ENCODE measurements at regions of chr16 and their contacts with region 1.

Region 1: DNA sequence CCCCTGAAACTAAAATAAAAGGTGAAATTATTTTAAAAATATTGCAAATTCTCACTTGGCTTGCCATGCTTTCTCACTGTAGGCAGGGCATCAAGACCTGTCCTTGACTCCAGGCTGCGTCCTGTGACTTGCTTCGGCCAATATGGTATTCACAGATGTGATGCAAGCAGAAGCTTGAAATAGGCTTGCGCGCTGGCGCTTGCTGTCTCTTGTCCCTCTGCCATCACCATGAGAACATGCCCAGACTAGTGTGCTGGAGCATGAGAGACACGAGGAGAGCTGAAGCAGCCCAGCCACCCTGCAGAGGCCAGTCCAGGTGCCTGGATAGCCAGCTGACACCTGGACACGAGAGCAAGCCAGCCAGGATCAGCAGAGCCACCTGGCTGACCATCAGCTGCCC is 21.8 kb upstream of the ZKSCAN2 start:
- DNase-seq: peak; percentile 28
- H3K4me3 Mint-ChIP-seq: no peak overlapping the region
- H3K27ac Mint-ChIP-seq: no peak overlapping the region
- H3K4me1 Mint-ChIP-seq: peaks cover 11% of the 10 kb centered on the region
- H3K27me3 Mint-ChIP-seq: no peaks in the 10 kb centered on the region
- CTCF ChIP-seq: no peak

Region 2: DNA sequence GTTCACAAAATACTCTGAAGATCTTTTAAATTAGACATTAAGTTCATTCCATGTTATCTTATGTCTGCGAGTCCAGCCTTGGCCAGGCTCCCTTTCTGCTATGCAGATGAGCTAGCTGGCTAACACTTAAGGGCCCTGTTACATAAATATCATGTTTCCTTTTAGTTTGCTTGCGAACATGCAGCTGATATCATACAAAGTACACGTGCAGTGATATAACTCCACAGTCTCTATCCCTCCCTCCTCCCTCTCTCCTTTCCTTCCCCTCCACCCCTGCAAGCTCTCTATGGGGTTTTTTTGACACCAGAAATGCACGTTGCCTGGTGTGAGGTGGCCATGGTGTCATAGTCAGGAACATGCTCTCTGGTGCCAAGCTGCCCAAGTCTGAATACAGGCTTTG is 310.4 kb before region 1 on chr16:
- CTCF ChIA-PET with region 1: no interaction called
- POLR2A ChIA-PET with region 1: no interaction called
- intact Hi-C with region 1: no loop called
- DNase-seq: no peak
- H3K4me3 Mint-ChIP-seq: no peak overlapping the region
- H3K27ac Mint-ChIP-seq: no peak overlapping the region
- H3K4me1 Mint-ChIP-seq: no peaks in the 10 kb centered on the region
- H3K27me3 Mint-ChIP-seq: no peaks in the 10 kb centered on the region
- CTCF ChIP-seq: no peak

Region 3: GRCh38 chr16:25257956-25258823 is 21.3 kb before region 1 on chr16:
- CTCF ChIA-PET with region 1: interaction called, 11 read pairs
- POLR2A ChIA-PET with region 1: no interaction called
- intact Hi-C with region 1: no loop called
- DNase-seq: peak; percentile 87
- H3K4me3 Mint-ChIP-seq: peak overlapping the region; percentile 91
- H3K27ac Mint-ChIP-seq: peak overlapping the region; percentile 99
- H3K4me1 Mint-ChIP-seq: peaks cover 30% of the 10 kb centered on the region
- H3K27me3 Mint-ChIP-seq: no peaks in the 10 kb centered on the region
- CTCF ChIP-seq: no peak

Region 4: DNA sequence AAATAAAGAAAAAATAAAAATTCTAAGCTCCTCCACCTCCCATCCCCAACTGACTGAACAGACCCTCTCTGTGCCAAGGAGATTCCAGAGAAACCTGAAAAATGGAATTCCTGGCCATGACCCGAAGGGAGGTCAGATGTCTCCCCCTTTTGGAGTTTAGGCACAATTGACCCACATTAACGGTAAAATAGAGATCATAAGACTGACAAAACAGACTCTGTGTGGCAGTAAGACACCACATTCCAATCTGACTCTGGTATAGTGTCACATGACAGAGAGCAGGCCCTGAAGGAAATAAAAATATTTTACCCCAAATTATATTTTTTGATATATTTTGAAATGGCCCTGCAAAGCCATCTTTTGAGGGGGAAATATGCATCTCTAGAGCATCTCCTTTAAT is 93.2 kb after region 1 on chr16:
- CTCF ChIA-PET with region 1: no interaction called
- POLR2A ChIA-PET with region 1: no interaction called
- intact Hi-C with region 1: no loop called
- DNase-seq: no peak
- H3K4me3 Mint-ChIP-seq: no peak overlapping the region
- H3K27ac Mint-ChIP-seq: no peak overlapping the region
- H3K4me1 Mint-ChIP-seq: no peaks in the 10 kb centered on the region
- H3K27me3 Mint-ChIP-seq: no peaks in the 10 kb centered on the region
- CTCF ChIP-seq: no peak

Region 5: GRCh38 chr16:25608002-25608401 is 328.5 kb after region 1 on chr16:
- CTCF ChIA-PET with region 1: interaction called, 10 read pairs
- POLR2A ChIA-PET with region 1: no interaction called
- intact Hi-C with region 1: no loop called
- DNase-seq: no peak
- H3K4me3 Mint-ChIP-seq: no peak overlapping the region
- H3K27ac Mint-ChIP-seq: no peak overlapping the region
- H3K4me1 Mint-ChIP-seq: no peaks in the 10 kb centered on the region
- H3K27me3 Mint-ChIP-seq: no peaks in the 10 kb centered on the region
- CTCF ChIP-seq: no peak

Region 6: GRCh38 chr16:25707982-25708583 is 428.6 kb after region 1 on chr16:
- CTCF ChIA-PET with region 1: interaction called, 11 read pairs
- POLR2A ChIA-PET with region 1: no interaction called
- intact Hi-C with region 1: no loop called
- DNase-seq: peak; percentile 8
- H3K4me3 Mint-ChIP-seq: no peak overlapping the region
- H3K27ac Mint-ChIP-seq: no peak overlapping the region
- H3K4me1 Mint-ChIP-seq: no peaks in the 10 kb centered on the region
- H3K27me3 Mint-ChIP-seq: no peaks in the 10 kb centered on the region
- CTCF ChIP-seq: peak; percentile 17

Region 7: DNA sequence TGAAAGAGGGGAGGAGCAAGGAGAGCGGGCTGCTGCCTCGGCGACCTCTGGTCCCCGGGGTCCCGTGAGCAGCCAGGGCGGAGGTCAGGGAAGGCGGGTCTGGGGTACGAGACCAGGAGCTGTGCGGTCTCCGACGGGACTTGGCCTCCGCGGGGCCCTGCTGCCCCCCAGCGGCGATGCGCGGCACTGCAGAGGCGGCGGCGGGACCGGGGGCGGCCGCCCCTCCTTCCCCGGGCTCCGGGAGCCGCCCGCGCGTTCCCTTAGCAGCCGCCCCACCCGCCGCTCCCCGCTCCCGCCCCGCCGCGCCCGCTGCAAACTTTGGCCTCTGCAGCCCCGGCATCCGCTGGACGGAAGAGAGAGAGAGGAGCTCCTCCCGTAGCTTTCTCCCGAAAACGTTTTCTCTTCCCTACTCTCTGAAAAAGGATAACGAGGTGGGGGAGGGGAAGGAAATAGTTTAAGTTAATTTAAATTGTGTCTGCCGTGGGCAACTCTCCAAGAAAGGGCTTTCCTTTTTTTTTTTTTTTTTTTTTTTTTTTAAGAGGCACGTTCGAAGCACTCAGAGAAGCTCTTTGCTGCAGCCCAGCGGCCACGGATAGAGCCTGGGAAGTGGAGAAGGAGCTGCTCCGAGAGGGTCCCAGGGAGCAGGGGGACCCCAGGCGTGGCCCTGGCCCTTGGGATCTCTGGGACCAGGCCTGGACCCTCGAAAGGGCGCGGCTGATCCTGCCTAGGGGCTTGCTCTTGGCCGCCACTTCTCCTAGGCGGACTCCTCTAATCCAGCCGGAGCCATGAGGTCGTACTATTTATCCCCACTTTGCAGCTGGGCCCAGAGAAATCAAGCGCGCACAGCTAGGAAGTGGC is 1830.4 kb after region 1 on chr16:
- CTCF ChIA-PET with region 1: interaction called, 10 read pairs
- POLR2A ChIA-PET with region 1: no interaction called
- intact Hi-C with region 1: loop called (anchors 1 kb)
- DNase-seq: peak; percentile 49
- H3K4me3 Mint-ChIP-seq: no peak overlapping the region
- H3K27ac Mint-ChIP-seq: no peak overlapping the region
- H3K4me1 Mint-ChIP-seq: no peaks in the 10 kb centered on the region
- H3K27me3 Mint-ChIP-seq: peaks cover 28% of the 10 kb centered on the region
- CTCF ChIP-seq: peak; percentile 97

Measured in MCF 10A (cell line).